HepG2 (cell line): ENCODE measurements at regions of chr15 and their contacts with region 1.

Region 1: GRCh38 chr15:82108489-82109078 is 62.8 kb upstream of the MEX3B start:
- DNase-seq: peak; percentile 23
- ATAC-seq: peak; percentile 97
- H3K4me3 ChIP-seq: no peak overlapping the region
- H3K27ac ChIP-seq: no peak overlapping the region
- H3K4me1 ChIP-seq: no peaks in the 10 kb centered on the region
- H3K27me3 ChIP-seq: peaks cover 3 to 17% of the 10 kb centered on the region in 2 experiments; a peak in 2 of 5 replicates
- CTCF ChIP-seq: peak; percentile 93
- EP300 ChIP-seq: no peak
- POLR2A ChIP-seq: no peak
- RAD21 ChIP-seq: peak; percentile 75

Region 2: GRCh38 chr15:81480645-81481053 is 627.9 kb before region 1 on chr15:
- CTCF ChIA-PET with region 1: no interaction called
- POLR2A ChIA-PET with region 1: no interaction called
- in situ Hi-C with region 1: no loop called
- intact Hi-C with region 1: loop called (anchors 5 kb)
- DNase-seq: peak; percentile 31
- ATAC-seq: peak; percentile 48; the same call in 2 of the 3 replicates
- H3K4me3 ChIP-seq: no peak overlapping the region
- H3K27ac ChIP-seq: no peak overlapping the region
- H3K4me1 ChIP-seq: no peaks in the 10 kb centered on the region
- H3K27me3 ChIP-seq: peaks cover 0 to 4% of the 10 kb centered on the region in 2 experiments; a peak in 1 of 5 replicates
- CTCF ChIP-seq: peak; percentile 71
- EP300 ChIP-seq: no peak
- POLR2A ChIP-seq: no peak
- RAD21 ChIP-seq: peak; percentile 54

Region 3: GRCh38 chr15:82039871-82040270 is 68.7 kb before region 1 on chr15:
- CTCF ChIA-PET with region 1: no interaction called
- POLR2A ChIA-PET with region 1: no interaction called
- in situ Hi-C with region 1: no loop called
- intact Hi-C with region 1: loop called (anchors 2 kb)
- DNase-seq: no peak
- ATAC-seq: no peak
- H3K4me3 ChIP-seq: no peak overlapping the region
- H3K27ac ChIP-seq: no peak overlapping the region
- H3K4me1 ChIP-seq: peaks cover 11% of the 10 kb centered on the region
- H3K27me3 ChIP-seq: peaks cover 0 to 10% of the 10 kb centered on the region in 2 experiments; a peak in 1 of 5 replicates
- CTCF ChIP-seq: no peak
- EP300 ChIP-seq: no peak
- POLR2A ChIP-seq: no peak
- RAD21 ChIP-seq: no peak

Region 4: GRCh38 chr15:82139823-82140268 is 31.3 kb after region 1 on chr15:
- CTCF ChIA-PET with region 1: interaction called, 8 read pairs
- POLR2A ChIA-PET with region 1: no interaction called
- in situ Hi-C with region 1: loop called (anchors 5 kb)
- intact Hi-C with region 1: loop called (anchors 1 kb)
- DNase-seq: peak; percentile 36
- ATAC-seq: no peak
- H3K4me3 ChIP-seq: no peak overlapping the region
- H3K27ac ChIP-seq: no peak overlapping the region
- H3K4me1 ChIP-seq: no peaks in the 10 kb centered on the region
- H3K27me3 ChIP-seq: no peaks in the 10 kb centered on the region
- CTCF ChIP-seq: peak; percentile 38; the same call in 1 of the 2 replicates
- EP300 ChIP-seq: no peak
- POLR2A ChIP-seq: no peak
- RAD21 ChIP-seq: no peak

Region 5: DNA sequence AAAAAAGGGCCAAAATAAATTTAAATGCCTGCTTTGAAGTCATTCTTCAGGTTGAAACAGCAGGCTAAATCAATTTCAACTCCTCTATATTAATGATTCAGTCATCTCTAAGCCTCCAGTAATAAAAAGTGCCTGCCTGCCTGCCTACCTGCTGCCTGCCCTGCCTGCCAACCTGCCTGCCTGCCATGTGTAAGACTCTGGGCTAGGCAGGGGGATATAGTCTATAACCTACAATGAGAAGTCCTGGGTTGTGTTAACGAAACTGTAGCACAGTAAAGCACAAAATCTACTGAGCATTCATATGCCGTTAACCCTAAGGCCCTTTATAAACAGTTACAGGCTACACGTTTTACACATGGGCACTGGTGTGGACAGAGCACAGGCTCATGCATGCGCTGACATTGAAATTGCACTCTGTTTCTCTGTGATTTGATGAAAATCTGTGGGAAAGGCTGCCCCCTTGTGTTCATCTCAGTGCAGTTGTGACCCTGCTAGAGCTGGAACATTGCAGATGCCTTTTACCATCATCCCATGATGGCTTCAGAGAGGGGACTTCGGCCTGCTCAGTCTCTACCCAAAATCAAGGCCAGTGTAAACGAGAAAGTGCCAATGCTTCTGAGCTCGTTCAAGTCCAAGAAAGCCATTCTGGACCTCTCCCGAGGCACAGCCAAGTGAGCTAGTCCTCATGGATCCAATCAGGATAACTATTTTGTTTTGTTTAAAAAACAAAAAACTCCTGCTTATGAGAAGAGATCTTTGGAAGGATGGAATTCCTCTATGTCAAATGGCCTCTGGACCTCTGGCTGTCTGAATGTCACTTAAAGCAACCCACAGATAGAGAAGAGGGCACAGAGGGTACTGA is 89.4 kb after region 1 on chr15:
- CTCF ChIA-PET with region 1: interaction called, 19 read pairs
- POLR2A ChIA-PET with region 1: no interaction called
- in situ Hi-C with region 1: loop called (anchors 5 kb)
- intact Hi-C with region 1: loop called (anchors 1 kb)
- DNase-seq: peak; percentile 56
- ATAC-seq: peak; percentile 97
- H3K4me3 ChIP-seq: no peak overlapping the region
- H3K27ac ChIP-seq: no peak overlapping the region
- H3K4me1 ChIP-seq: no peaks in the 10 kb centered on the region
- H3K27me3 ChIP-seq: no peaks in the 10 kb centered on the region
- CTCF ChIP-seq: peak; percentile 85
- EP300 ChIP-seq: no peak
- POLR2A ChIP-seq: no peak
- RAD21 ChIP-seq: peak; percentile 36